Heart right ventricle (tissue), 16 donors: ENCODE measurements at regions of chr19 and their contacts with region 1.

Region 1: DNA sequence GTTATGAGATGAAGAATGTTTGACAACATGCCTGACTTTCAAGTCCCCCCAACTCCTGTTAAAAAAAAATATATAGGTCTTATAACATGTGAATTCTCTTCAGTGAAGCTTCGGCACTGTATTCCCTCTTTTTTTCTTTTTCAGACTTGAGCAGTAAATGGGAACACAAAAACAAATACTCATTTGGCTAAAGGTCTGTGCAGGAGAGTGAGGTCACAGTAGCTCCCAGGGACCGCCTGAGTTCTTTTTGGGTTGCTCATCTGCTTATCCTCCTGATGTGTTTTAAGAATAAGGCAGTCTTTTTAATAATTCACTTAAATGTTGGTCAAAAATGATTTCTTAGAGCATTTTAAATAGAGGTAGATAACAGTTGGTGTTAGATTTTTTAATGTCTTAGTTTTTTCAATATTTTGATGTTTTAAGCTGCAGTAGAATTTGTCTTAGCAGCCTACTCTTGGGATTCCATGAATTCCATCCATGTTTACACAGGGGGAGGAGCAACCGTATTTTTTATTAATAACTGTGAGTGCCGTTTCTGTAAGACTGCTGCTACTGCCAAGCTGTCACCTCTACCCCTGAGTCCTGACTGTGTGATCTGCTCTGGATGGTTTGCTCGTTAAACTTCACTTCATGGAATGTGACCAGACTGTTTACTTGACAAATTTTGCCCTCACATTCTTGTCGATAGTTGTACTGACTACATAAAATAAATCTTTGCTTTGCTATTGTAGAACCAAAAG is 14.9 kb downstream of the HNRNPM start:
- DNase-seq: no peak
- ATAC-seq: peak in 6 of 8 donors; percentile 46 to 55 (median 50)
- H3K4me3 ChIP-seq: peak overlapping the region in 3 of 10 donors; percentile 7 to 12 (median 10)
- H3K27ac ChIP-seq: peak overlapping the region in 8 of 10 donors; percentile 31 to 71 (median 46)
- H3K4me1 ChIP-seq: peaks cover 35 to 91% (median 77%) of the 10 kb centered on the region in 9 donors
- H3K27me3 ChIP-seq: no peaks in the 10 kb centered on the region
- CTCF ChIP-seq: no peak

Region 2: DNA sequence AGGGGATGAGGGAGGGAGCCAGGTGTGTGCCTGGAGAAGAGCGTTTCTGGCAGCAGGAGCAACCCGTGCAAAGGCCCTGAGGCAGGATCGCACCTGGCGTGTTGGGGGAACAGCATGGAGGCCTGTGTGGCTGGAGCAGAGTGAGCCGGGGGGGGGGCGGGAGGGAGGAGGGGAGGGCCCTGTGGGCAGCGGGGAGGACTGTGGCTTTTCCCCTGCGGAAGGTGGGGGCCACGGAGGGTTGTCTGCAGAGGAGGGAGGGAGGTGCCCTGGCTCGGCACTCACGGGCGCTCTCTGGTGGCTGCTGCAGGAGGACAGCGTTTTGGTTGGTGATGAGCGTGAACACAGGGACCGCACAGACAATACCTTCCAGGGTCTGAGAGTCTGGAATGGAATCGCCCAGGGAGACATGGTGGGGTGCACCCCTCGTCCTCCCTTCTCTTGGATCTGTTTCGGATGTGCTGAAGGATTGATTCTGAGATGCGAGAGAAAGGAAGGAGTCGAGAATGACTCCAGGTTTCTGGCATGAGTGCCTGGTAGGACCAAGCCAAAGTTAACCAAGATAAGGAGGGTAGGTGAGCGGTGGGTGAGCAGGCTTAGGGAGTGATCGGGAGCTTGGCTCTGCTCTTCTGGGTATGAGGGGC is 63.0 kb before region 1 on chr19:
- intact Hi-C with region 1: loop called in 1 of 10 experiments (anchors 5 kb)
- DNase-seq: peak; percentile 55 to 79
- ATAC-seq: peak; percentile 5 to 59 (median 36)
- H3K4me3 ChIP-seq: no peak overlapping the region
- H3K27ac ChIP-seq: peak overlapping the region in 4 of 10 donors; percentile 15 to 100 (median 50)
- H3K4me1 ChIP-seq: peaks cover 34 to 71% (median 63%) of the 10 kb centered on the region in 9 donors
- H3K27me3 ChIP-seq: no peaks in the 10 kb centered on the region
- CTCF ChIP-seq: peak; percentile 45 to 78 (median 66)

Region 3: GRCh38 chr19:8811315-8812172 is 351.9 kb after region 1 on chr19:
- intact Hi-C with region 1: no loop called
- DNase-seq: no peak
- ATAC-seq: no peak
- H3K4me3 ChIP-seq: no peak overlapping the region
- H3K27ac ChIP-seq: no peak overlapping the region
- H3K4me1 ChIP-seq: no peaks in the 10 kb centered on the region
- H3K27me3 ChIP-seq: no peaks in the 10 kb centered on the region
- CTCF ChIP-seq: no peak

Region 4: GRCh38 chr19:9323919-9324583 is 864.4 kb after region 1 on chr19 and contains the start of gene ZNF559:
- intact Hi-C with region 1: loop called in 1 of 10 experiments (anchors 5 kb)
- DNase-seq: peak; percentile 93 to 96
- ATAC-seq: peak; percentile 96 to 99 (median 98)
- H3K4me3 ChIP-seq: peak within 1 kb of the TSS; percentile 57 to 92 (median 74)
- H3K27ac ChIP-seq: peak within 1 kb of the TSS; percentile 61 to 93 (median 90)
- H3K4me1 ChIP-seq: peaks cover 0 to 22% (median 6%) of the 10 kb centered on the region in 9 donors
- H3K27me3 ChIP-seq: no peaks in the 10 kb centered on the region
- CTCF ChIP-seq: peak in 7 of 9 donors; percentile 8 to 46 (median 26)
- total RNA-seq, gene ZNF559: 9.8 to 21.2 (median 17.5) TPM